ENCODE measurements at regions of chr9 and their contacts with region 1.

Region 1: GRCh38 chr9:36728651-36729520 is 156.2 kb downstream of the MELK start:
- DNase-seq: peak; percentile 76
- CTCF ChIP-seq: peak; percentile 91

Region 2: GRCh38 chr9:36597412-36598178 is 131.3 kb before region 1 on chr9:
- CTCF ChIA-PET with region 1: interaction called, 25 read pairs
- POLR2A ChIA-PET with region 1: no interaction called
- DNase-seq: peak; percentile 25
- CTCF ChIP-seq: peak; percentile 49

Region 3: GRCh38 chr9:36612946-36613345 is 115.9 kb before region 1 on chr9:
- CTCF ChIA-PET with region 1: interaction called, 14 read pairs
- POLR2A ChIA-PET with region 1: no interaction called
- DNase-seq: no peak
- CTCF ChIP-seq: no peak

Region 4: GRCh38 chr9:36632892-36633291 is 96.0 kb before region 1 on chr9:
- CTCF ChIA-PET with region 1: interaction called, 74 read pairs
- POLR2A ChIA-PET with region 1: no interaction called
- DNase-seq: peak; percentile 32
- CTCF ChIP-seq: peak; percentile 51

Region 5: GRCh38 chr9:36665921-36666431 is 62.9 kb before region 1 on chr9:
- CTCF ChIA-PET with region 1: interaction called, 11 read pairs
- POLR2A ChIA-PET with region 1: no interaction called
- DNase-seq: peak; percentile 40
- CTCF ChIP-seq: no peak

Region 6: DNA sequence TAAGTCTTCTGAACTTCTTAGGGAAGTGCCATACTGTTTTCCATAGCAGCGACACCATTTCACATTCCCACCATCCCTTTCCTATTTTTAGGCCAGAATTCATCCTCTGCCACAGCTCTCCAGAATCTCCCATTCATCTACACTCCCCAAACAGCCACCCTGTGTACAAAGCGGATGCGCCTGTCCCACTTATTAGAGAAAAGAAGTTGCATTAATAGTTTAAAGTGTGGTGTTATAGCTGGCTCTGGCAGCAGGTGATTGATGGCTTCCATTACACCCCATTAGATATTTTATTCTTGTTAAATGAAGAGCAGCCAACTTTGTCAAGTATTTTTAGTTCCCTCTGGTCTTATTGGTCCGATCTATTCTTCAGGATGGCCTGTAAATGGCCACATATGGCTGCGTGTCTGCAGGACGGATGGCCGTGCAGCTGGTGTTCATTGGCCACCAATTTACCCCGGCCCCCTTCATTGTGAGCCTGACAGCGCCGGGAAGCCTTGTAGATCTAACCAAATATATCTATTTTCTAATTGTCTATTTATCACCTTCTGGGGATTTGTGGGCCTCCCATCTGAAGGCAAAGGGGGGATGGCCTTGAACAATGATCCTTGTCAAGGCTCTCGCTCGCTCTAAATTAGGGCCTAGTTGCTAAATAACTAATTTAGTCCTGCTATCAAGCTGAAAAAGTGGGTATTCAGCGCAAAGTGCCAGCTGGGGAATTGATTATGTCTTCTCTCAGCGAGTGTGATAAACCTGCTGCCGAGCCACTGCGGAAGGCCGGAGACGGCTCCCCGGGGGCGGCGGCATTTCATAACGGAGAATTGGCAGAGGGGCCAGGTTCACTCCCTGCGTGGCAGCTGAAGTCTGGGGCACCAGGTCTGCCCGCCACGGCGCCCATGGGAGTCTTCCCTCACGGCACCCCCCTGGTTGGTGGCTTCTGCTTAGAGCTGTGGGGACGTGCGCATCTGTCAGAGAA is 15.1 kb before region 1 on chr9:
- CTCF ChIA-PET with region 1: interaction called, 17 read pairs
- POLR2A ChIA-PET with region 1: no interaction called
- DNase-seq: no peak
- CTCF ChIP-seq: no peak

Region 7: GRCh38 chr9:36742264-36742663 is 13.4 kb after region 1 on chr9:
- CTCF ChIA-PET with region 1: interaction called, 36 read pairs
- POLR2A ChIA-PET with region 1: interaction called, 3 read pairs
- DNase-seq: no peak
- CTCF ChIP-seq: no peak